ENCODE measurements at regions of chr21 and their contacts with region 1.

Region 1: DNA sequence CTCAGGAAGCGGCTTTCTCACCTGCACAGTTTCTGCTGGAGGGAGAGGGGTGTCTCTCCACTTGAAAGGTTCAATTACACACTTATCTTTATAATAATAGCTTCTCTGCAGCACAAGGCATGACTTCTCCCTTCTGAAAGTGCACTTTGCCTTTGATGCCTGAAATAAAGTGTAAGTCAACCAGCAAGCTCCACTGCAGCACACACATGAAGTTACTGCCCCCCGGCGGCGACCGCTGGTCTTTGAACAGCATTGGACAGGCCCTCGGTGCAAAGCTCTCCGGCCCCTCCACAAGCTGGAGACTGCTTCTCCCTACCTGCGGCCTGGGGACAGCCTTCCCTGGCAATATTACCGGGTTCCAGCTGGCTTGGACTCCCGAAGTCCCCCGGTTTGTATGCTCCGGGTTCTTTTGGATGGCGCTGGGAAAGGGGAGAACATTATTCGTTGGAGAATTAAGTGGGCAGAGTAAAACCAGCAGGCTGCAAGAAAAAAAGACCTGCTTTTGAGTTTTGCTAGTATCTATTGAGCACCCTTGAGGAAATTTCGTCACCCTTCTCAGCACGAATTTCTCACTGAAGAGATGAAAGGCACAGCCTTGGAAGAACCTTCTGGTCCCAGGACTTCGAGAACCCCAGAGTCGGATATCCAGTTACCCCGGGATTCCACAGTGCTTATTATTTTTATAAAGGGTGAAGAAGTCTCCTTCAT is 11.8 kb downstream of the RCAN1 start:
- DNase-seq: peak; percentile 78
- CTCF ChIP-seq: peak; percentile 82

Region 2: DNA sequence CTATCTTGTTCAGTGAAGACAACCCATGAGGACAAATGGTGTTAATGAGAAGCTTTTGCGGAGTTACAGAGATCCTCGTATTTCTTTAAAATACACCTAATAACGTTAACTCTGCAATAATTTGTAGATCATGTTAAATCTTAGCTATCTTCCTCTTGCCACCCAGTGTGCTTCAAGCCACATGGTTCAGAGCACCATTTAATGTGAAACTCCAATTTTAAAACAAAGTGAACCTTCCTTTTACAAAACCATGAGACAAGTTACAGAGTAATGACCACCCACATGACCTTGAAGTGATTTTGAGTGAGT is 241.1 kb before region 1 on chr21:
- CTCF ChIA-PET with region 1: interaction called, 20 read pairs
- POLR2A ChIA-PET with region 1: no interaction called
- DNase-seq: no peak
- CTCF ChIP-seq: no peak

Region 3: GRCh38 chr21:34510148-34511142 is 92.7 kb before region 1 on chr21:
- CTCF ChIA-PET with region 1: interaction called, 237 read pairs
- POLR2A ChIA-PET with region 1: no interaction called
- DNase-seq: peak; percentile 83
- CTCF ChIP-seq: peak; percentile 89

Region 4: GRCh38 chr21:34570313-34570712 is 32.8 kb before region 1 on chr21:
- CTCF ChIA-PET with region 1: interaction called, 12 read pairs
- POLR2A ChIA-PET with region 1: no interaction called
- DNase-seq: no peak
- CTCF ChIP-seq: no peak

Region 5: DNA sequence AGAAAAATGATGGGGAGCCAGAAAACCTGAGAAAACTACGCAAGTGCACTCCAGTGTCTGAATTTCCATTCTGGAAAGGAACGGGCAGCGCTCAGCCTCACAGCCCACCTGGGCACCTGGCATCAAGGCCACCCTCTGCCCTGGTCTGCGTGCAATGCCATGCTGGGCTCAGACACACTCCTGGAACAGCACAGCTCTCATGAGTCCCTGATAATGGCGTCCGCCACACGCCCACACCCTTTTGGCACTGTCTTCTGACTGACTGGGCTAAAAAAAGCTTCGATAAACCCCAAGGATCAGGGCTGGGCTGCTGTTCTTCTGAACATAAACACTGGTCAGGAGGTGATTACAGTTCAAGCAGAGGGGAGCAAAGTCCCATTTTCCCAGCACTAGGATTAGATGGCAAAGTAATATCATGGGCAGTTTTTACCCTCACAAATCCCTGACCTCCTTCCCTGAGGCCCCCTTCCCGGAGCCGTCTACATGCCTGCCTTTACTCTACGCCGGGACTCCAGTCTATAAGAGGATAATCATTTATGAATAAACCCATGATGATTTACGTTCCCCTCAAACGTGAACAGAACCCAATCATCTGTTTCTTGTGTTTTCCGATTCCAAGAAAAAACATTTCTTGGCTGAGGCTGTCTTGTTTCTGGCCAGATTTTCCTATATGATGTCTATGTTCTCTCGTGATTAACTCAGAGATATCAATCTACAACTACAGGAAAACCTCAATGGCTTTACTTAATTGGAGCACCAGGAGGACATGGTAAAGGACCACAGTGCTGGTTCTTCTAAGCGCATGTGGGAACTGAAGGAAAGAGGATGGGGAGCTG is 10.8 kb before region 1 on chr21:
- CTCF ChIA-PET with region 1: interaction called, 49 read pairs
- POLR2A ChIA-PET with region 1: no interaction called
- DNase-seq: no peak
- CTCF ChIP-seq: no peak

Region 6: GRCh38 chr21:34625030-34625593 is 22.0 kb after region 1 on chr21:
- CTCF ChIA-PET with region 1: interaction called, 33 read pairs
- POLR2A ChIA-PET with region 1: no interaction called
- DNase-seq: no peak
- CTCF ChIP-seq: no peak

Region 7: GRCh38 chr21:34801519-34802132 is 198.5 kb after region 1 on chr21:
- CTCF ChIA-PET with region 1: no interaction called
- POLR2A ChIA-PET with region 1: no interaction called
- DNase-seq: peak; percentile 61
- CTCF ChIP-seq: peak; percentile 69

Measured in GM10248 (cell line).